ENCODE measurements at regions of chr15 and their contacts with region 1.

Region 1: DNA sequence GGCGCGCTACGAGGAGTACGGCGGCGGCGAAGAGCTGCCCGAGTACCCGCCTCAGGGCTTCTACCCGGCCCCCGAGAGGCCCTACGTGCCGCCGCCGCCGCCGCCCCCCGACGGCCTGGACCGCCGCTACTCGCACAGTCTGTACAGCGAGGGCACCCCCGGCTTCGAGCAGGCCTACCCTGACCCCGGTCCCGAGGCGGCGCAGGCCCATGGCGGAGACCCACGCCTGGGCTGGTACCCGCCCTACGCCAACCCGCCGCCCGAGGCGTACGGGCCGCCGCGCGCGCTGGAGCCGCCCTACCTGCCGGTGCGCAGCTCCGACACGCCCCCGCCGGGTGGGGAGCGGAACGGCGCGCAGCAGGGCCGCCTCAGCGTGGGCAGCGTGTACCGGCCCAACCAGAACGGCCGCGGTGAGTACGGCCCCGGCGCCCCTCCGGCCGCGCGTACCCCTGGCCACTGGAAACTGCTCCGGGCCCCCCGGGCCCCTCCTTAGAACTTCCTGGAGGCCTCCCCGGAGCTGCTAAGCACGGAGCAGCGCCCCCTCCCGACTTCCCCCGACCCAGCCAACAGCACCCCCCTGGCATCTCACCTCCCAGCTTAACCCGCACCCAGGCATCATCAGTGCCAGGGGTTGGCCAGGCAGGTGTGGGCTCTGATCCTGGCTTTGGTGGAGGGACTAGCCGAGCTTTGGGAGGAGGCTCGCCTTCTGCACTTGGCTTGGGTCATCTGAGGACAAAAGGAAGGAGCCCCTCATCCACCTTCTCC is 1.4 kb downstream of the LOXL1 start:
- DNase-seq: peak; percentile 89
- ATAC-seq: peak; percentile 42

Region 2: GRCh38 chr15:73717802-73718201 is 209.9 kb before region 1 on chr15:
- intact Hi-C with region 1: loop called (anchors 5 kb)
- DNase-seq: peak; percentile 43
- ATAC-seq: no peak

Region 3: DNA sequence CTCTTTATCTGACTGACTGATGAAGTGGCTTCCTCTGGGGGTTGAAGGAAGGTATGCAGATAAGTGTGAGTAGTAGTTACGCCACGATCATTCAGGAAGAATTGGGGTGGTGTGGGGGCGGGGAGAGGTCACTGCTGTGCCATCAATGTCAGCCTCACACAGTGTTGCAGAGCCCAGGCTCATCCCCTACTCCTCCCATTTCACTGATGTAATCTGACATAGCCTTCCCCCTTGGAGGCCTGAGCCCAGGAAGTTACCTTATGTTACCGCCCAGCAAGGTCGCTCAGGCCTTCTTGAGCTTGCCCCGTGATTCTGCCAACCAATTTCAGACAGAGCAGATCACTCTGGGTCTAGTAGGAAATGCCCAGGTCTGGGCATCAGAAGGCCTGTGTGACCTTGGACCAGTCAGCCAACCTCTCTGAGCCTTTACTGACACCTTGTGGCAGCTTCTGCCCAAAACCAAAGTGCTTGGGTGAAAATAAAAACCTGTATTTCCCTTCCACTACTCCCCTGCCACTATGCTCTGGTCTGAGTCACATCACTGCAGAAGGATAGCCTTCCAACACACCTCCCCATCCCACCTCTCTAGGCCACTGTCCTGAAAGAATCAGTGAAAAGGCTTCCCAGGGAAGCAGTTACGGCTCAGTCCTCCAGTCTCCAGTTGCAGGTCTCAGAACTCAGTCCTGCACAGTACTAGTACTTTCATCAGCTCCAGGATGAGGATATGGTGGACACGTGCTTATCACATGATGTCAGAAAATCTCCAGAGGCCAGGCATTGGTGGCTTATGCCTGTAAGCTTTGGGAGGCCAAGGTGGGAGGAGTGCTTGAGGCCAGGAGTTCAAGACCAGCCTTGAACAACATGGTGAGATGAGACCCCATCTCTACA is 146.4 kb before region 1 on chr15:
- intact Hi-C with region 1: no loop called
- DNase-seq: no peak
- ATAC-seq: no peak

Region 4: DNA sequence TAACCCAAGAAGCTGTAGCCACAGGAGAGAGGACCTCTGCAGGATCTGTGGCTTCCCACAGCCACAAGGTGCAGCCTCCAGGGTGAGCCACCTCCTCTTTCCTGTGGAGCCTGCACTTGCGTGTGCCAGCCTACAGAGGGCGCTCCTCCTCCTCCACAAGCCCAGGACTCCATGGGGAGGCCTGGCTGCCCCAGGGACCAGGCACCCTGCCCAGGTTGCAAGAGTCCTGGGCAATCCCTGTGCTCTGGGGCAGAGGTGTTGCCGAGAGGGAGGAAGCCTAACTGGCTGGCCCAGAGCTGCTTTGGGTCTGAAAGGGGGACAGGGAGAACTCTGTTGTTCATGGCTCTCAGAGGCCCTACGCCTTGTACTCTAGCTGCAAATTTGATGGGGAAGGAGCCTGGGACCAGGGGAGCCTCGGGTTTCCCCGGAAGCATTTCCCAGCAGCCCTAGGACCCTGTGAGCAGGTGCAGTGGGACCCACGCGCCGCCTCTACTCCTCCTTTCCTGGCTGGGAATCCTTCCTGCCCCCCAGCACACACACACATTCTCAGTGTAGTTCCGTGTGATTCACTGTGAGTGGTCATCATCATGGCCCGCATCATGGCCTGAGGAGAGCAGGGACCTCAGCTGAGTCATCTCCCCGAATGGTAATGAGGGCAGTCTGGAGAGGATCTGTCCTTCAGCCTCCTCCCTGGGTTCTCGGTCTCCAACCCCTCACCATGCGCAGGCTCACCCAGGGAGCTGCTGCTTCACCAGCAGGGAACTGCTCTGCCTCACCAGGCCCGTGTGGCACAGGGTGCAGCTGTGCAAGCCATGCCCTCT is 30.0 kb before region 1 on chr15:
- intact Hi-C with region 1: loop called (anchors 1 kb)
- DNase-seq: peak; percentile 80
- ATAC-seq: peak; percentile 90

Region 5: DNA sequence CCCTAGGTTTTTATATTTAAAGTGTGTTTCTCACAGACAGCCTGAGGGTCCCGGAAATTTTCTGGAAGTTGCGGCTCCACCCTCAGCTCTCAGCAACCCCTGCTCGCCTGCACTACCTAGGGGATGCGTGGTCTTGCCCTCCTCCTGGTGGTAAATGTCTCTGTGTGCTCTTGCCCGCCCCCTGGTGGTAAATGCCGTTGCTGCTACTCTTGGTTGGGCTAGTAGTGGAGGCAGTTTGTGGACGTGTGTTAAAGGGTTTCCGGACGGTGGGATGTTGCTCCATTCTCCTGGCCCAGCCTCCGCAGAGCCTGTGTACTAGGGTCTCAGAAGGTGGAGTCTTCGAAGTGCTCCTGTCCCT is 37.1 kb after region 1 on chr15:
- intact Hi-C with region 1: no loop called
- DNase-seq: peak; percentile 86
- ATAC-seq: peak; percentile 93

Measured in Right ventricle myocardium inferior (tissue), 1 donor.